MCF 10A (cell line): ENCODE measurements at regions of chr2 and their contacts with region 1.

Region 1: DNA sequence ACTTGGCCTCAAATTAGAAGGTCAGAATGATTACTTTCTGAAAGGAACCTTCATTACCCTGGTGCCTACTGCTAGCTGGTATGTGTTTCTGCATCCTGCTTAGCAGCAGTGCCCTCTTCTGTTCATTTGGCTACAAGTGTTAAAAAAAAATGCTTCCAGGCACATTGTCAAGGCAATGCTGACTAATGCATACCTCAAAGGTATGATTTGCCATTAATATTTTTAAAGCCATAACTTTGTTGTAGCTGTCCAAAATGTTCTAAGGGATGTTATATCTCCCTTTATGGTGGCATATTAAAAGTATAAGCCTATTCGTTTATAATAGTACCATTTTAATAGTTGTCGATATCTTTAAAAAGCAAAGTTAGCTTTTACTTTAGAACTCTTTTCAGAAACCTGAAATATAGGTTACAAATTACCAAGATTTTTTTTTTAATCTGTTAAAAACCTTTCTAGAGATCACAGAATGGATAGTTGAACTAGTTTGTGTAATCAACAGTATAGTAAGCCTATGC is 52.0 kb upstream of the FAM171B start:
- DNase-seq: peak; percentile 81
- H3K4me3 Mint-ChIP-seq: no peak overlapping the region
- H3K27ac Mint-ChIP-seq: peak overlapping the region; percentile 46
- H3K4me1 Mint-ChIP-seq: peaks cover 6% of the 10 kb centered on the region
- H3K27me3 Mint-ChIP-seq: no peaks in the 10 kb centered on the region
- CTCF ChIP-seq: peak; percentile 81

Region 2: GRCh38 chr2:186485871-186486650 is 155.8 kb before region 1 on chr2 and contains the start of gene ZC3H15:
- CTCF ChIA-PET with region 1: interaction called, 5 read pairs
- POLR2A ChIA-PET with region 1: interaction called, 10 read pairs
- intact Hi-C with region 1: no loop called
- DNase-seq: peak; percentile 97
- H3K4me3 Mint-ChIP-seq: peak within 1 kb of the TSS; percentile 90
- H3K27ac Mint-ChIP-seq: peak within 1 kb of the TSS; percentile 91
- H3K4me1 Mint-ChIP-seq: peaks cover 47% of the 10 kb centered on the region
- H3K27me3 Mint-ChIP-seq: no peaks in the 10 kb centered on the region
- CTCF ChIP-seq: no peak
- total RNA-seq, gene ZC3H15: 75.8 and 98.8 TPM in 2 replicates

Region 3: GRCh38 chr2:186503848-186504606 is 137.8 kb before region 1 on chr2:
- CTCF ChIA-PET with region 1: interaction called, 162 read pairs
- POLR2A ChIA-PET with region 1: interaction called, 45 read pairs
- intact Hi-C with region 1: loop called (anchors 1 kb)
- DNase-seq: peak; percentile 35
- H3K4me3 Mint-ChIP-seq: no peak overlapping the region
- H3K27ac Mint-ChIP-seq: no peak overlapping the region
- H3K4me1 Mint-ChIP-seq: peaks cover 9% of the 10 kb centered on the region
- H3K27me3 Mint-ChIP-seq: no peaks in the 10 kb centered on the region
- CTCF ChIP-seq: peak; percentile 42

Region 4: DNA sequence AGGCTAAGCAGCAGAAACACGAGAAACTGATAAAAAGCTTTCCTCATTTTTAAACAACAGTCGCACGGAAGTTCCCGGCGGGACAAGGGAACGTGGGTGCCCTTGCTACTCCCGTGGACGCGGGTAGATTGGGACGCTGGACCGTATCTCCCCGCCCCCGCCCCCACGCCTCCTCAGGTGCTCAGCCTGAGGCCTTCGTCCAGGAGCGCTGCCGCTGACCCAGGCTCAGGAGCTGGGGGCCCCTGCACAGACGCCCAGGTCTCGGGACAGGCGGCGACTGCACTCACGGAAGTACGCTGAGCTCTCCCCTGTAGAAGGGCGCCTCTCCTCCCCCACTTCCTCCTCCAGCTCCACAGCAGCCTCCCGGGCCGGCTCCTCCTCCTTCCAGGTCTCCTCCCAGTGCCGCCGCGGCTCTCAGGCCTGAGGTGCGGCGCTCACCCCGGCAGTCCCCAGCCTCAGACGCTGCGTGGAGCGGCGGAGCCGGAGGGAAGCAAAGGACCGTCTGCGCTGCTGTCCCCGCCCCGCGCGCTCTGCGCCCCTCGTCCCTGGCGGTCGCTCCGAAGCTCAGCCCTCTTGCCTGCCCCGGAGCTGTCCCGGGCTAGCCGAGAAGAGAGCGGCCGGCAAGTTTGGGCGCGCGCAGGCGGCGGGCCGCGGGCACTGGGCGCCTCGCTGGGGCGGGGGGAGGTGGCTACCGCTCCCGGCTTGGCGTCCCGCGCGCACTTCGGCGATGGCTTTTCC is 52.1 kb before region 1 on chr2 and contains the start of gene ITGAV:
- CTCF ChIA-PET with region 1: interaction called, 15 read pairs
- POLR2A ChIA-PET with region 1: interaction called, 20 read pairs
- intact Hi-C with region 1: loop called (anchors 1 kb)
- DNase-seq: peak; percentile 95
- H3K4me3 Mint-ChIP-seq: peak within 1 kb of the TSS; percentile 76
- H3K27ac Mint-ChIP-seq: peak within 1 kb of the TSS; percentile 60
- H3K4me1 Mint-ChIP-seq: peaks cover 20% of the 10 kb centered on the region
- H3K27me3 Mint-ChIP-seq: no peaks in the 10 kb centered on the region
- CTCF ChIP-seq: no peak
- total RNA-seq, gene ITGAV: 56.1 TPM in 2 replicates

Region 5: DNA sequence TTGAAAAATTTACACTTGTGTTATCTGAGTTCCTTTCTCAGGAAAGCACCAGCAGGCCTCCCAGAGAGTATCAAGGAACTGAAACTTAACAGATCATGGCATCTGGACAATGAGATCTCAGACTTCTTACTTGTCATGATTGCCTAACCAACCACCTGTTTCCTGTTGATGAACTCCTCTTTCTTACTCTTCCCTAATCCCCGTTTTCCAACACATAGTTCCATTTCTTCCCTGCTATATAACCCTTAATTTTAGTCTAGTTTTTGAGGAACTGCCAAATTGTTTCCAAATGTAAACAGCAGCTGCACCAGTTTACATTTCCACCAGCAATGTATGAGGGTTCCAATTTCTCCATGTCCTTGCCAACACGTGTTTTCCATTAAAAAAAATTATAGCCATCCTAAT is 45.9 kb after region 1 on chr2:
- CTCF ChIA-PET with region 1: no interaction called
- POLR2A ChIA-PET with region 1: no interaction called
- intact Hi-C with region 1: no loop called
- DNase-seq: no peak
- H3K4me3 Mint-ChIP-seq: no peak overlapping the region
- H3K27ac Mint-ChIP-seq: no peak overlapping the region
- H3K4me1 Mint-ChIP-seq: peaks cover 7% of the 10 kb centered on the region
- H3K27me3 Mint-ChIP-seq: no peaks in the 10 kb centered on the region
- CTCF ChIP-seq: no peak